A673 (cell line): ENCODE measurements at regions of chr17 and their contacts with region 1.

Region 1: GRCh38 chr17:8288336-8289102 is at the start of gene RANGRF:
- DNase-seq: peak; percentile 91
- H3K4me3 ChIP-seq: peak within 1 kb of the TSS; percentile 62
- H3K27ac ChIP-seq: peak within 1 kb of the TSS; percentile 80
- H3K4me1 ChIP-seq: peaks cover 11% of the 10 kb centered on the region
- H3K27me3 ChIP-seq: no peaks in the 10 kb centered on the region
- CTCF ChIP-seq: no peak
- total RNA-seq, gene RANGRF: 26.8 and 33.6 TPM in 2 replicates

Region 2: DNA sequence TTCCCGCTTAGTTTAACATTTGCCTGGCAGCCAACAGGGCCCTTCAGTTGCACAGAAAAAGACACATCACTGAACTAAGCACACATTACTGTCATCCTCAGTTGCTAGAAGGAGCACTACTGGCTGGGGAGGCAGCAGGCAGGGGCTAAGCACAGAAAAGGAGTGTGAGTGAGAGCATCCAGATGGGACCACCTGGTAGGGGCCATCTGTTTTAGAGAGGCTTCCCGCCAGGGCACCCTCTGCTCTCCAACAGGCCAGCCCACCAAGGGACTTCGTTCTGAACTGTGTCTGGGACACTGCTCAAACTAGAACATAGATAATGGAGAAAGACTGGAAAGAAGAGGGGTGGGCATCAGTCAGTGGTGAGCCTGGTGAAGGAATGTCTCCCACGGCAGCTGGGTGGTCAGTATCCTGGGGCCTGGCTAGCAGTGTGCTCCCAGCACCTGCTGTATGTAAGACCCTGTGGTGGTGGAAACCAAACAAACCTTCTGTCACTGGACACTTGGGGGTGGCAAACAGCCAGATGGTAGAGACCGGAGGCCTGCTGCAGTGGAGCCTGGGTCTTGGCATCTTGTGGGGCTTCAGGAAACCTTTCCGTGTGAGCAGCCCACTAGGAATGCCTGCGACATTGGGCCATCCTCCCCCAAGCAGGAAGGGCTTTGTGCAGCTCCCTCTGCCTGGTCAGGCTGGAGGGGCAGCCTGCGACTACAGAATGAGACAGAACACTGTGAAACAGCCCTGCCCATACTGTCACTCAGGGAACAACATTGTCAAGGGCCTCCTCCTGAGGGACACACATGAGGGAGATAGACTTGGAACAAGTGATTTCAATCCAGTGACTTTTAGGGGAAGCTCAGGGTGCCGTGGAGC is 12.9 kb before region 1 on chr17:
- CTCF ChIA-PET with region 1: no interaction called
- POLR2A ChIA-PET with region 1: interaction called, 14 read pairs
- intact Hi-C with region 1: no loop called
- DNase-seq: no peak
- H3K4me3 ChIP-seq: no peak overlapping the region
- H3K27ac ChIP-seq: no peak overlapping the region
- H3K4me1 ChIP-seq: no peaks in the 10 kb centered on the region
- H3K27me3 ChIP-seq: no peaks in the 10 kb centered on the region
- CTCF ChIP-seq: no peak